ENCODE measurements at regions of chr16 and their contacts with region 1.

Region 1: GRCh38 chr16:19696328-19696727 is 21.7 kb downstream of the KNOP1 start:
- DNase-seq: peak; percentile 61
- H3K4me3 ChIP-seq: no peak overlapping the region
- H3K27ac ChIP-seq: no peak overlapping the region
- H3K4me1 ChIP-seq: peaks cover 7% of the 10 kb centered on the region
- H3K27me3 ChIP-seq: no peaks in the 10 kb centered on the region
- CTCF ChIP-seq: no peak

Region 2: GRCh38 chr16:19274165-19274797 is 422.0 kb before region 1 on chr16:
- CTCF ChIA-PET with region 1: no interaction called
- POLR2A ChIA-PET with region 1: no interaction called
- intact Hi-C with region 1: no loop called
- DNase-seq: no peak
- H3K4me3 ChIP-seq: no peak overlapping the region
- H3K27ac ChIP-seq: no peak overlapping the region
- H3K4me1 ChIP-seq: no peaks in the 10 kb centered on the region
- H3K27me3 ChIP-seq: no peaks in the 10 kb centered on the region
- CTCF ChIP-seq: no peak

Region 3: DNA sequence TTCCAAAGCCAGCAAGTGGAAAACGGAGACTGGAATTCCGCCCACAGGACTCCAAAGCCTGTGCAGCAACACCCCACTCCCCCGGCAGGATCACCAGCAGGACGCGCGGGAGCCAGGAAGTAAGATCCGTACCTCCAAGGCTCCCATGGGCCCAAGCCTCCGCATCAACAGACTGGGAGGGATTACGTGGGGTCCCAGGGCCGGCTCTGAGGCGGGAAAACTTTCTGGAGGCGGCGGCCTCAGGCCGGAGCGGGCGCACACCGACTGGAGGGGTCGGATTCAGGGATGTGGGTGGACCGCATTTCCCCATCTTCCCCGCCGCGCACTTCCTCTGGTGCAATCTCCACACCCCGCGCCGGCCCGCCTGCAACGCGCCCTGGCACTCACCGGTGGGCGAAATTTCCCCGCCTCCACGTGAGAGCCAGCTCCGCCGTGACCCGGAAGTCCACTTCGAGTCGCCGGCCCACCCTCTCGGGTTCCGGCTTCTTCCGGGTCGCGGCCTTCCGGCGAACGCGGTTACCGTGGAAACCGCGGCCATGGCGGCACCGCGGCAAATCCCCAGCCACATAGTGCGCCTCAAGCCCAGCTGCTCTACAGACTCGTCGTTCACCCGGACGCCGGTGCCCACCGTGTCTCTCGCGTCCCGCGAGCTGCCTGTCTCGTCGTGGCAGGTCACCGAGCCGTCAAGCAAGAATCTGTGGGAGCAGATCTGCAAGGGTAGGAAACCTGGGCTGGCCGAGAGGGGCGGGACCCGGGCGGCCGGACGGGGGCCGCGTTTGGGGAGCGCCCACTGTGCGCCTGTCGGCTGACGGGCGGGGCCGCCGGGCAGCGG is 21.7 kb after region 1 on chr16 and contains the starts of genes IQCK and KNOP1:
- CTCF ChIA-PET with region 1: no interaction called
- POLR2A ChIA-PET with region 1: no interaction called
- intact Hi-C with region 1: loop called (anchors 2 kb)
- DNase-seq: peak; percentile 94
- H3K4me3 ChIP-seq: peak within 1 kb of the TSS; percentile 81
- H3K27ac ChIP-seq: peak within 1 kb of the TSS; percentile 77
- H3K4me1 ChIP-seq: peaks cover 6% of the 10 kb centered on the region
- H3K27me3 ChIP-seq: no peaks in the 10 kb centered on the region
- CTCF ChIP-seq: no peak
- total RNA-seq, gene IQCK: 11.2 and 14.1 TPM in 2 replicates
- total RNA-seq, gene KNOP1: 65.0 and 68.9 TPM in 2 replicates

Measured in A673 (cell line).